ENCODE measurements at regions of chr2 and their contacts with region 1.

Region 1: DNA sequence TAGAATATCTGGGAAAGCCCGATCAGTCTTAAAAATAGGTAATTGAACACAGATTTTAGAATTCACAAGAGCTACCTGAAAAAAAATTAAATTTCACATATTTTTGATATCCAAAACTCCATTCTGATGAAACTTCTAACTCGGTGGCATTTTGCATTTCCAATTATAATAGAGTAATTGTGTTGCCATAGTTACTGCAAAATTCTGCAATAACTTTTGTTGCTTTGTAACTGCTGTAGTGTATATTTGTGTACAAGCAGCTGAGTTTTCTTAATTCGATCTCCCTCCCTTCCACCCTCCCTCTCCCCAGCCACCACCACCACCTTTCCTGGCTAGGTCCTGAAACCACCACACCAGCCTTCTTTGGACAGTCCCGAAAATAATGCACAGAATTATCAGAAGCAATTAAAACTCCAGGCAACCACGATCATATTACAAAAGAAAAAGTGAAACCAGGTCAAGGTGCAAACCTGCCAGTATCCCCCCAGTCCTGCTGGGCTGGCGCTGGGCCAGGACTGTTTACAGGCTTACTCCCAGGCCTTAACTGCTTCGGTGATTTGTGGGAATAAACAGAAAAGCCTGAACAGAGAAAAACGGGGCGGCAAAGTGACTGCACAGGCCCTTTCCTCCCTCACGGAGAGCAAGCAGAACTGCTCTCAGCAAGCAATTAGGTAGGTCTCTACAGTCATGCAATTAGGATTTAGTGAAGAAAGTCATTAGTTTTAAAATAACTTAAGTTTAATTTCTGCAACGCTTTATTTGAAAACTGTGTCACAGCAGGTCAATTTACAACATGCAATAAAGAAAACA is 1.5 kb downstream of the HDAC4 start:
- DNase-seq: peak; percentile 19
- H3K4me3 Mint-ChIP-seq: peak overlapping the region; percentile 81
- H3K27ac Mint-ChIP-seq: peak overlapping the region; percentile 80
- H3K4me1 Mint-ChIP-seq: peaks cover 17% of the 10 kb centered on the region
- H3K27me3 Mint-ChIP-seq: no peaks in the 10 kb centered on the region
- CTCF ChIP-seq: no peak

Region 2: DNA sequence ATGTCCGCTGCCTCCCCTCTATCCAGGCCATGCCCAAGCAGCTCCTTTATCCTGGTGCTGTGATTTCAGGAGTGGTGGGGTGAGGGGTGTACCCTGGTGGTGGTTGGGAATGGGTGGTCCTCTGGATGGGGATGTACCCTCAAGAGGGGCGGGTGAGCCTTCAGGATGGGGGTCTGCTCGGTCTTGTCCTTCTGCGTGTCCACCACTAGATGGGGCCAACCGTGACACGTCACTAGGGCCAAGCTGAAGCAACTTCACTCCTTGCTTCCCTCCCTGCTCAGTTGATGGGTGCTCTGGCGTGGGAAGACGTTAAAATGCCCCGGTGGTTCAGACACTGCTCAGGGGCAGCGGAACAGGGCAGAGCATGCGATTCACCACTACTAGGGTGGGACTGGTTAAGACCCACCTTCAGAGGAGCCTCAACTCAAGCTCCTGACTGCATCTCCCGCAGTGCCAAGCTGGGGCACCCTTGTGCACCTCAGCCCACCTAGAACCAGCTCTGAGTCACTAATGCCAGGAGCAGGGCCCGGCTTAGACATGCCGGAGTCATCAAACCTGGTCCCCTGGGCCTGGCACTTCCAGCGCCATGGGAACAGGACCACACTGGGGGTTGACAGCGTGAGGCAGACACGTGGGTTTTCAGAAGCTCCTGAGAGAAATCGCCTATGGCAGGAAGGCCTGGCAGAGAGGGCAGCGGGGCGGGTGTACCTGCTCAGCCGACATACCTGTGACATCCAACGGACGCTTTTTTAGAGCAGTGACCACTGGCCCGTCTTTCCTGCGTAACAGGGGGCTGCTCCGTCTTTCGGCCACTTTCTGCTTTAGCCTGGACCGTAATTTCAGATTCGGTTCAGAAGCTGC is 255.2 kb before region 1 on chr2:
- CTCF ChIA-PET with region 1: no interaction called
- intact Hi-C with region 1: loop called (anchors 10 kb)
- DNase-seq: peak; percentile 27
- H3K4me3 Mint-ChIP-seq: no peak overlapping the region
- H3K27ac Mint-ChIP-seq: no peak overlapping the region
- H3K4me1 Mint-ChIP-seq: no peaks in the 10 kb centered on the region
- H3K27me3 Mint-ChIP-seq: no peaks in the 10 kb centered on the region
- CTCF ChIP-seq: peak; percentile 60

Region 3: GRCh38 chr2:239193925-239194677 is 205.2 kb before region 1 on chr2:
- CTCF ChIA-PET with region 1: no interaction called
- intact Hi-C with region 1: no loop called
- DNase-seq: no peak
- H3K4me3 Mint-ChIP-seq: no peak overlapping the region
- H3K27ac Mint-ChIP-seq: no peak overlapping the region
- H3K4me1 Mint-ChIP-seq: no peaks in the 10 kb centered on the region
- H3K27me3 Mint-ChIP-seq: no peaks in the 10 kb centered on the region
- CTCF ChIP-seq: no peak

Region 4: DNA sequence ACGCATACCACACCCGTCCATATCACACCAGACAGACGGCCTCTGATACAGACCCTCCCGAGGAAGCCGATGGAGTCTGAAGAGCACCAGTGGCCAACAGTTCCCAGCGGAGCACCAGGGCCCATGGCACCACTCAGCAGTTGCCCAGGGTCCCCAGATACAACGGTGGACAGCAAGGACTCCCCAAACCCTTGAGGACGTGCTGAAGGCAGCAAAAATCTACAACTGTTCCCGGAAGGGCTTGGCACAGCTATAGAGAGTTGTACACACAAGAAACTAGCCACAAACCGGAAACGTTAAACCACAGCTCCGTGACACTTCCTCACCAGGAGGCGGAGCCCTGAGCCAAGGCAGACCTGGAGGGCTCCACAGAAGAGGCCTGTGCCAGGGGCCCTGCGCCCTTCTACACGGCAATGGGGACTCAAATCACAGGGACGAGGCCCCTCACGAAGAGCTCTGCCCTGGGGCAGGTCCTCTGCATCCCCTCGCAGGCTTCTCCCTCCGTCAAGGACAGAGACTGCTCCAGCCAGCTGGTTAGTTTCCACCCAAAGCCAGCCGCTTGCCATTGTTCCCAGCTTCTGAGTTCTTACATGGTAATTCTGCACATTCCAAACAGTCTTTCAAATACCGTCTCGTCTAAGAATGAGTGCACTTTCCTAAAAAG is 131.9 kb before region 1 on chr2:
- CTCF ChIA-PET with region 1: no interaction called
- intact Hi-C with region 1: loop called (anchors 10 kb)
- DNase-seq: peak; percentile 51
- H3K4me3 Mint-ChIP-seq: no peak overlapping the region
- H3K27ac Mint-ChIP-seq: peak overlapping the region; percentile 50
- H3K4me1 Mint-ChIP-seq: peaks cover 37% of the 10 kb centered on the region
- H3K27me3 Mint-ChIP-seq: no peaks in the 10 kb centered on the region
- CTCF ChIP-seq: no peak

Region 5: GRCh38 chr2:239318790-239319661 is 80.3 kb before region 1 on chr2:
- CTCF ChIA-PET with region 1: no interaction called
- intact Hi-C with region 1: loop called (anchors 5 kb)
- DNase-seq: peak; percentile 54
- H3K4me3 Mint-ChIP-seq: peak overlapping the region; percentile 67
- H3K27ac Mint-ChIP-seq: peak overlapping the region; percentile 61
- H3K4me1 Mint-ChIP-seq: peaks cover 25% of the 10 kb centered on the region
- H3K27me3 Mint-ChIP-seq: no peaks in the 10 kb centered on the region
- CTCF ChIP-seq: no peak

Region 6: DNA sequence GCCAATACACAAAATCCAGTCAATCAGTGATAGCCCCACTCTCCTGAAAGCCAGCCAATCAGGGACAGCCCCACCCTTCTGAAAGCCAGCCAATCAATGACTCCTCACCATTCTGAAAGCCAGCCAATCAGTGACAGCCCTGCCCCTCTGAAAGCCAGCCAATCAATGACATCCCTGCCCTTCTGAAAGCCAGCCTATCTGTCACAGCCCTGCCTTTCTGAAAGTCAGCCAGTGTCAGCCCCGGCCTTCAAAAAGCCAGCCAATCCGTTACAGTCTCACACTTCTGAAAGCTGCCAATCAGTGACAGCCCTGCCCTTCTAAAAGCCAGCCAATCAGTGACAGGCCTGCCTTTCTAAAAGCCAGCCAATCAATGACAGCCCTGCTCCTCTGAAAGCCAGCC is 97.4 kb after region 1 on chr2:
- CTCF ChIA-PET with region 1: no interaction called
- intact Hi-C with region 1: no loop called
- DNase-seq: no peak
- H3K4me3 Mint-ChIP-seq: no peak overlapping the region
- H3K27ac Mint-ChIP-seq: no peak overlapping the region
- H3K4me1 Mint-ChIP-seq: no peaks in the 10 kb centered on the region
- H3K27me3 Mint-ChIP-seq: peaks cover 68% of the 10 kb centered on the region
- CTCF ChIP-seq: no peak

Measured in Calu3 (cell line).